GM10248 (cell line): ENCODE measurements at regions of chr2 and their contacts with region 1.

Region 1: DNA sequence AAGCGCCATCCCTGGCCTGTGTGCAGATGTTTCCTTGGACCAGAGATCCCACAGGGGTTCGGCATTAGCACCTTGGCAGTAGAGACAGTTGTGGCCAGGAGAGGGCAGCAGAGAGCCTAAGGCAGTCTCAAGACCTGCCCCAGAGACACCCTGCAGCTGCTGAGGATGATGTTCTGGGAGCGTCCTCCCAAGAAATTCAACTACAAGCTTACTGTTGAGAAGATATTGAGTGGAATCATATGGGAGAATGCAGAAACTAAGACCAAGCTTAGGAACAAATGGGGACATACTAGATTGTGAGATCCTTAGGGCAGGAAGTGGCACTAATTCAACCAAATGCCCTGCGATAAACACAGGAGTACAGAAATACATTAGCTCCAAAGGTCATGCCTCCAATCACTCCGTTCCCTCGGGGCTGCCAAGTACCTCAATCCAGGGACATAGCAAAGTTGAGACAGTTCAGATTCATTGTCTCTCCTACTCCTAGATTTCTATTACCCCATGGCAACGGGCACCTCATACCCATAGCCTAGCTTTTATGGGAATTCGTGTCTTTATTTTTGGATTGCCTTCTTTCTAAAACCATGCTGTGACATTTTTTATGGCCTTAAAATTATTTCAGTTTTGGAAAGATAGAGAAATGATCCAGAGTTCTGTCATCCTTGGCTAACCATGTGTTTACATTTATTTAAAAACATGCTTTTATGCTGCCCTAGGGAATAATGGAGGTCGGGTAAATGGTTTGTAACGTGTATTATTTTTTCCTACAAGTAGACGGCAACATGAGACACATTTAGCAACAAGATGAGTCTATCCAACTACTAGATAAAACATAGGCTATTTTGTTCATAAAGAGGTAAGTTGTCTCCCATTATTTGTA is 2.2 kb upstream of the ERMN start:
- DNase-seq: peak; percentile 79
- CTCF ChIP-seq: peak; percentile 93

Region 2: GRCh38 chr2:157279331-157279730 is 48.5 kb before region 1 on chr2:
- CTCF ChIA-PET with region 1: no interaction called
- POLR2A ChIA-PET with region 1: no interaction called
- DNase-seq: no peak
- CTCF ChIP-seq: no peak

Region 3: GRCh38 chr2:157312866-157313486 is 14.9 kb before region 1 on chr2:
- CTCF ChIA-PET with region 1: interaction called, 258 read pairs
- POLR2A ChIA-PET with region 1: no interaction called
- DNase-seq: no peak
- CTCF ChIP-seq: no peak

Region 4: GRCh38 chr2:157363612-157364101 is 35.8 kb after region 1 on chr2:
- CTCF ChIA-PET with region 1: interaction called, 15 read pairs
- POLR2A ChIA-PET with region 1: no interaction called
- DNase-seq: no peak
- CTCF ChIP-seq: no peak

Region 5: GRCh38 chr2:157413326-157414035 is 85.6 kb after region 1 on chr2:
- CTCF ChIA-PET with region 1: interaction called, 18 read pairs
- POLR2A ChIA-PET with region 1: no interaction called
- DNase-seq: peak; percentile 48
- CTCF ChIP-seq: no peak

Region 6: GRCh38 chr2:157443795-157444640 is 116.2 kb after region 1 on chr2 and contains the start of gene CYTIP:
- CTCF ChIA-PET with region 1: interaction called, 49 read pairs
- POLR2A ChIA-PET with region 1: no interaction called
- DNase-seq: peak; percentile 38
- CTCF ChIP-seq: no peak

Region 7: DNA sequence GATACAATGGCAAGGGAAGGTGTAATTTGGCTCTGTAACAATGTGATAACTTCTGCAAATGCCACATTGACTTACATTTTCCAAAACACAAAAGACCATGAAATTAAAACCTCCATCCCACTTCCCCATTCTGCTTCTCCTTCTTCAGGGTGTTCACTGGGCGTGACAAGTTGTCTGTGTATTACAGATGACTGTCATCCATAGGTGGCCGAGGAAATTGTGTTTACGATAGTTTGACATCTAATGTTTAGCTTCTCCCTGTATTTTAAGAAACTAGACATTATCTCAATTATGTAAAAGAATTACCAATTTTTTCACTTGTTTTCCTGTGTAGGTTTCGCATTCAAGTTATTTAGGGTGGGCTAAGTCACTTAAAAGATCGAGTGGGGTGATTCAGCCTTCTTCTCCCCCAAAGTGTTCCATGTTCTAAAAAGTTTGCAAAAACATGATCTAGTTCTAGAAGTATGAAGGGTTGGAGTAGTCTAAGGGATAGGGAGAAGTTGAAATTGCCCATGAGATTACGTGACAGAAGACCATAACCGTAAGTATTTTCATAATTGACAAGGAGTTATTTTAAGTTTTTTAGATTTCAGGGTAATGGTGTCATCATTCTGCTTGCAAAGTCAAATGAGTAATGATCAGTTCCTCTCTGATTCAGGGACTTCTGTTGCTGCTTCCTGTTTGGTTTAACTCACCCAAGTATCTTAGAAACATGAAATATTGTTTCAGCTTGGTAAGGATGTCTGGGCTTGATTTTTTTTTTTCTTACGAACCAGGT is 141.3 kb after region 1 on chr2:
- CTCF ChIA-PET with region 1: interaction called, 27 read pairs
- POLR2A ChIA-PET with region 1: no interaction called
- DNase-seq: peak; percentile 66
- CTCF ChIP-seq: no peak

Region 8: GRCh38 chr2:157497638-157498314 is 169.9 kb after region 1 on chr2:
- CTCF ChIA-PET with region 1: interaction called, 18 read pairs
- POLR2A ChIA-PET with region 1: no interaction called
- DNase-seq: peak; percentile 39
- CTCF ChIP-seq: peak; percentile 76